ENCODE measurements at regions of chr5 and their contacts with region 1.

Region 1: DNA sequence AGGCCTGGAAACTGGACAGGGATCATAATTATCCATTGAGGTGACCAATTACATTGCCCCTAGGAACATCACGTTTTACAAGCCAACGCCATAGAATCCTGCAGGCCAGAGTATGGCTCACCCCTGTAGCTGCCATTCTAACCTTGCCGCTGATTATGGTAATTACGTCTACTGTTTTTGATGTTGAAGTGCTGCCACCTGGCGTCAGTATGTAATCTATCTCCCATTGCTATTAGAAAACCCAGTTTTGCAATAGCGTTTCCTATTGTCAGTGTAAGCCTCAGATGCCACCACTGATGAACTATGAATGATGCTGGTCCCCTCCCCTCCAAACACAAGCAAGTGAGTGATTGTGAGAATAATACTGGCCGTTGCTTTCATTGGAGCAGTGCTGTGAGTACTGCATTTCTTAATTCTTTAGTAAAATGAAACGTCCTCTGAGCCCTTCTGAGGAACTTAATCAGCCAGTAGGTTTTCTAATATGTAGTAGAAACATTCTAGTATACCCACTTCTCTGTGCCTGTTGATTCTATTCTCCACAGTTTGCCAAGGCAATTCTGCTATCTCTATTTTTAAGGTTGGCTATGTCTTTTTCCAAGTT is 100.5 kb upstream of the NMUR2 start:
- DNase-seq: peak in 1 of 2 donors; percentile 41
- ATAC-seq: peak; percentile 58 to 86 (median 71)
- H3K4me3 ChIP-seq: no peak overlapping the region
- H3K27ac ChIP-seq: no peak overlapping the region
- H3K4me1 ChIP-seq: no peaks in the 10 kb centered on the region
- H3K27me3 ChIP-seq: peaks cover 0 to 7% (median 0%) of the 10 kb centered on the region in 7 donors
- CTCF ChIP-seq: peak in 8 of 9 donors; percentile 44 to 72 (median 64)

Region 2: GRCh38 chr5:151338734-151339133 is 1166.8 kb before region 1 on chr5:
- intact Hi-C with region 1: no loop called
- DNase-seq: no peak
- ATAC-seq: no peak
- H3K4me3 ChIP-seq: no peak overlapping the region
- H3K27ac ChIP-seq: no peak overlapping the region
- H3K4me1 ChIP-seq: no peaks in the 10 kb centered on the region
- H3K27me3 ChIP-seq: peaks cover 0 to 19% (median 3%) of the 10 kb centered on the region in 7 donors
- CTCF ChIP-seq: no peak

Region 3: DNA sequence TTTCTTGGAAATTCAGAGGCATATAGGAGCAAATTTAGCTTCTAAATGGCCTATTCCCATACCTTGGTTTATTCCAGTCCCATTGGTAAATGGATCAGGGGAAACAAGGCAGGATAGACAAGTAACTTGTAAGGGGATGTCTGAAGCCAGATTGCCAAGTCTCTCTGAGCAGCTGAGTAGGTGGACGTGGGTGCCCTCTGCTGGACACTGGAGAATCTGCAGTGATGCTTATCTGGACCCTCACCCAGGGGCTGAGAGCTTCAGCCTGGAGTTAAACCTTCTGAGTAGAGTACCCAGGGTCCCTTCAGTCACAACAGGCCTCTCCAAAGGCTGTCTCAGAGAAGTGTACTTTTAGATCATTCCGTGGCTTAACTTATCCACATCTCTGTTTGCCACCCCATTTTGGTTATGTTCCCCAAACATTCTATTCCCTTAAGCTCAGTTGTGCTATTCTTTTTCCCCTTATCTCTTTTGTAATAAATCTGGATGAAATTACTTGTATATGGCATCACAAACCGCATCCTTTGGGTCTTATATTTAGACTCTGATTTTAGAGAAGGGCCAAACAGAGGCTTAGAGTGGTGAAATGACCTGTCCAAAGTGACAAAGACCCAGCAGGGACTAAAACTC is 362.6 kb before region 1 on chr5:
- intact Hi-C with region 1: loop called in 4 of 10 experiments (anchors 10 kb)
- DNase-seq: peak; percentile 29 to 40
- ATAC-seq: peak in 7 of 8 donors; percentile 55 to 83 (median 64)
- H3K4me3 ChIP-seq: no peak overlapping the region
- H3K27ac ChIP-seq: no peak overlapping the region
- H3K4me1 ChIP-seq: peaks cover 0 to 5% (median 0%) of the 10 kb centered on the region in 9 donors
- H3K27me3 ChIP-seq: peaks cover 0 to 4% (median 0%) of the 10 kb centered on the region in 7 donors
- CTCF ChIP-seq: peak; percentile 66 to 92 (median 87)

Region 4: GRCh38 chr5:152271420-152271819 is 234.1 kb before region 1 on chr5:
- intact Hi-C with region 1: loop called in 3 of 10 experiments (anchors 5 to 10 kb)
- DNase-seq: peak in 1 of 2 donors; percentile 46
- ATAC-seq: peak; percentile 50 to 79 (median 74)
- H3K4me3 ChIP-seq: no peak overlapping the region
- H3K27ac ChIP-seq: peak overlapping the region in 1 of 10 donors; percentile 52
- H3K4me1 ChIP-seq: peaks cover 8 to 50% (median 30%) of the 10 kb centered on the region in 9 donors
- H3K27me3 ChIP-seq: no peaks in the 10 kb centered on the region
- CTCF ChIP-seq: peak; percentile 16 to 69 (median 54)

Region 5: DNA sequence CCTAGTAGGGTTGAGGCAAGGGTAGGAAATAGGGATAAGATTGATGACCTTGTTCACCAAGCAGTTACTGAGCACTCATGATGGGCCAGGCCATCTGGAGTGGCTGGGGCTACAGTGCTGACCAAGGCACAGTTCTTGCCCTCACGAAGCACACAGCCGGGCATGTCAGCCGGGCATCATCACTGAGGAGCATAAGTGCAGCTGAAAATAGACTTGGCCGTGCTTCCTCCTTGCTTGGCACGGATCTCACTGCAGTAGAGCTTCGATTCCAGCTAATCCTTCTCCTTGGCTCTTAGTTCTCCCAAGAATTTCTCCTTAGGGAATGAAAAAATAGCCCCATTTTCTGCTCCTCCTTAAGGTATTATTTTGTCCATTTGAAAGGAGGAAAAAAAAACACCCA is 217.0 kb before region 1 on chr5:
- intact Hi-C with region 1: loop called in 1 of 10 experiments (anchors 10 kb)
- DNase-seq: peak; percentile 52 to 60
- ATAC-seq: peak; percentile 88 to 99 (median 96)
- H3K4me3 ChIP-seq: no peak overlapping the region
- H3K27ac ChIP-seq: peak overlapping the region in 7 of 10 donors; percentile 18 to 67 (median 34)
- H3K4me1 ChIP-seq: peaks cover 0 to 19% (median 11%) of the 10 kb centered on the region in 9 donors
- H3K27me3 ChIP-seq: no peaks in the 10 kb centered on the region
- CTCF ChIP-seq: no peak

Region 6: GRCh38 chr5:152379331-152379730 is 126.2 kb before region 1 on chr5:
- intact Hi-C with region 1: loop called in 7 of 10 experiments (anchors 2 to 10 kb)
- DNase-seq: no peak
- ATAC-seq: peak in 2 of 8 donors; percentile 42 to 49
- H3K4me3 ChIP-seq: no peak overlapping the region
- H3K27ac ChIP-seq: peak overlapping the region in 1 of 10 donors; percentile 23
- H3K4me1 ChIP-seq: peaks cover 0 to 17% (median 8%) of the 10 kb centered on the region in 9 donors
- H3K27me3 ChIP-seq: no peaks in the 10 kb centered on the region
- CTCF ChIP-seq: peak in 2 of 9 donors; percentile 10 to 15

Region 7: DNA sequence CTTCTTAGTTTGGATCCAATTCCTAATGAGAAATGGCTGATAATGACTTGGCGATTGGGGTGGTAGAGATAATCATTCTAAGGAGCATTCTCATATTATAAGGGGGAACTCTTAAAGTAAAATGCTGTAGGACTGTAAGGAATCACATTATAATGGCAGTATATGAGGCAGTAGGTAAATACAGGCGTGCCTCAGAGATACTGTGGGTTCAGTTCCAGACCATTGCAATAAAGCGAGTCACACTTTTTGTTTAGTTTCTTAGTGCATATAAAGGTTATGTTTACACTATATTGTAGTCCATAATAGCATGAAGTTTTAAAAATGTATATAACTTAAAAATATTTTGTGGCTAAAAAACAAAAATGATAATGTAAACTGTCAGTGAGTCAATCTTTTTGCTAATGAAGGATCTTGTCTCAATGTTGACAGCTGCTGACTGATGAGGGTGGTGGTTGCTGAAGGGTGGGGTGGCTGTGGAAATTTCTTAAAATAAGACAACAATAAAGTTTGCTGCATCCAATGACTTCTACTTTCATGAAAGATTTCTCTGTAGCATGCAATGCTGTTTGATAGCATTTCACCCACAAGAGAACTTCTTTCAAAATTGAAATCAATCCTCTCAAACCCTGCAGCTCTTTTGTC is 116.2 kb before region 1 on chr5:
- intact Hi-C with region 1: loop called in 1 of 10 experiments (anchors 10 kb)
- DNase-seq: no peak
- ATAC-seq: no peak
- H3K4me3 ChIP-seq: no peak overlapping the region
- H3K27ac ChIP-seq: no peak overlapping the region
- H3K4me1 ChIP-seq: peaks cover 0 to 4% (median 0%) of the 10 kb centered on the region in 9 donors
- H3K27me3 ChIP-seq: no peaks in the 10 kb centered on the region
- CTCF ChIP-seq: no peak

Region 8: DNA sequence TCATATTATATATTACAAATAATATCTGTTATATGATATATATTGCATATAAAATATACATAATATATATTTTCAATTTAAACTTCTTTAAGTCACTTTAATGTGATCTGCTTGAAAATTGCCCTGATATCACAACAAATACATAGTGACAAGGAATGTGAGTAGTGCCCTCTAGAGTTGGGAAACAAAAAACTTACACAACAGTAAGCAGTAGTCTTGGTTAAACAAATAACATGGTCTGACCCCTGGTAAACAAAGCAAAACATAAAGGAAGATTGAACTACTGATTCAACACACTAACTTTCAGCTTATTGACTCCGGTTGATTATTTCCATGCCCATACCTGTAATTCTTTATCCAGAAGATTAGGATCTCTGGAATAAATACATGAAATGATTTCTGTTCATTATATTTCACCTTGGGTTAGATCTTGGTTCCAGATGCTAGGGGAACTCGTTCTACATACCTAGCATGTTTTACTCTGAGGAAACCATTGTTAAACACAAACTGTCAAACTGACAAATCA is 87.9 kb after region 1 on chr5:
- intact Hi-C with region 1: no loop called
- DNase-seq: no peak
- ATAC-seq: no peak
- H3K4me3 ChIP-seq: no peak overlapping the region
- H3K27ac ChIP-seq: no peak overlapping the region
- H3K4me1 ChIP-seq: no peaks in the 10 kb centered on the region
- H3K27me3 ChIP-seq: no peaks in the 10 kb centered on the region
- CTCF ChIP-seq: no peak